ENCODE measurements at regions of chr13 and their contacts with region 1.

Region 1: DNA sequence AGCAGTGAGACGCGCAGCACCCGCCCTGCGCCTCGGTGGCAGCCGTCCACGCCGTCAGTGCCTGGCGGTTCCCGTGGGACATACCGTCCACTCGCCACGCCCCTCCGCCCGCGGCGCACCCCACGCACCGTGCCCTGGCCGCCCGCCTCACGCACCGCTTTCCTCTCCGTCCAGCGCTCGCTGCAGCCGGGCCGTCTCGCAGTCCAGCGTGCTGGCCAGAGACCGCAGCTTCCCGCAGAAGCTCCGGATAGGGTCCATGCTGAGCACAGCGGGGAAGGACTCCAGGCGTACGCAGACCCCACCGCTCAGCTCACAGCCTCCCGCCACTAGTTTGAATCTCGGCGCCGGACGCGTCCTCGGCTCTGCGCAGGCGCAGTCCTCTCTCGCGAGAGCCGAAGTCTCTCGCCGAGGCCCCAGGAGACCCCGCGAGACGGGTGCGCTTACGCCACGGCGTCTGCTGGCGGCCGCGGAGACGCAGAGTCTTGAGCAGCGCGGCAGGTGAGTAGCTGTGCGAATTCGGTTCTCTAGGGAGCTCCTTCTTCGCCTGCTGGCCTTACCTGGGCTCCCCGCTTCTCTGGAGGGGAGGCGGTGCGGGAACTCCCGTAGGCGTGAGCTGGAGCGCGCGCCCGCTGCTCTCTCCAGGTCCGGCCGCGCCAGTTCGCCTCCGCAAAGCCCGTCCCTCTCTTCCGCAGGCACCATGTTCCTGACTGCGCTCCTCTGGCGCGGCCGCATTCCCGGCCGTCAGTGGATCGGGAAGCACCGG is at the starts of genes MRPL57 and SKA3:
- DNase-seq: peak; percentile 69 to 92
- ATAC-seq: peak; percentile 96 to 98
- H3K4me3 ChIP-seq: peak within 1 kb of the TSS; percentile 75
- H3K27ac ChIP-seq: peak within 1 kb of the TSS; percentile 92 to 100
- H3K4me1 ChIP-seq: peaks cover 16% of the 10 kb centered on the region; the same call in 2 of the 3 replicates
- CTCF ChIP-seq: no peak
- EP300 ChIP-seq: no peak
- POLR2A ChIP-seq: peak; percentile 90
- RAD21 ChIP-seq: no peak
- polyA plus RNA-seq, gene MRPL57: 19.2 and 23.0 TPM in 2 replicates
- polyA plus RNA-seq, gene SKA3: 15.7 and 19.2 TPM in 2 replicates

Region 2: DNA sequence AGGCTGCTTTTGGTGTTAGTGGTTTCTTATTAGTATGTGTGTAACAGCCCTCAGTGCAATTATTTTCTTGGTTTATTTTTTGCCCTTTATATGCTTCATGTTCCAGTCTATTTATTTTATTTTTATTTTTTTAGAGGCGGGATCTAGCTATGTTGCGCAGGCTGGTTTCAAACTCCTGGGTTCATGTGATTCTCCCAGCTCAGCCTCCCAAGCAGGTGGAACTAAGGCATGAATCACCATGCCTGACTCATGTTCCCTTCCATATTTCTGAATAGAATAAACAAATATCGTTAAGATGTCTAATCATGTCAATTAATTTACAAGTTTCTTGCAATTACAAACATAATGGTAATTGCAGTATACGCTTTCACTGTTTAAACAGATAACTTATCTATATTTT is 11.8 kb before region 1 on chr13:
- CTCF ChIA-PET with region 1: interaction called, 4 read pairs
- POLR2A ChIA-PET with region 1: interaction called, 10 read pairs
- DNase-seq: no peak
- ATAC-seq: no peak
- H3K4me3 ChIP-seq: no peak overlapping the region
- H3K27ac ChIP-seq: no peak overlapping the region
- H3K4me1 ChIP-seq: peaks cover 6% of the 10 kb centered on the region; the same call in 2 of the 3 replicates
- CTCF ChIP-seq: no peak
- EP300 ChIP-seq: no peak
- POLR2A ChIP-seq: no peak
- RAD21 ChIP-seq: no peak

Region 3: DNA sequence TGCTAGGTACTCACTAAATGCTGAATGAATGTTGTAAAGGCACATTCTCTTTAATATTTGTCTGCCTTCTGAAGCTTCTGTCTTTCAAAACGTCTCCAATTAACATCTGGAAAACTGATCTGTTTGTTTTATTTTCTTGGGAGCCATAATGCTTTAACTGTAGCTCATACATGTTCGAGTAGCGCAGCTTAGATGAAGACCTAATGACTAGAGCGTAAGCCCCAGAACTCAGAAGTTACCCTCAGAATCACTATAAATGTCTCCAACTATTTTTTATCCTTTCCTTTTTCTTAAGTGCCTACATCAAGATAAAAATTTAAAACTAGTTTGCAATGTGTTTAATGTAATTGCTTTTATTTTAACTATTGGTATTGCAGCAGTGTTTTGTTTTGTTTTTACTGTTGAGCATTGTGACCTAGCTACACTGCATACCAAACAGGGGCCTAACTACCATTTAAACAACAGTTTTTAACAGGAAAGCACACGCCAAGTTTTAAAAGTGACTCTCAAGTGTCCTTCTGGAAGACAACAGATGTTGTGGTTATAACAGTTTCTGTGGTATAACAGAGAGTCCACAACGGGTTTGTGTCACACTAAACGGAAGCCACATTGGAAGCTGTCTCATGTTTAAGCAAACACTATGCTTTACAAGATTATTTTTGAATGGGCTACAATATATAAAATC is 42.1 kb after region 1 on chr13:
- CTCF ChIA-PET with region 1: no interaction called
- POLR2A ChIA-PET with region 1: no interaction called
- DNase-seq: no peak
- ATAC-seq: no peak
- H3K4me3 ChIP-seq: no peak overlapping the region
- H3K27ac ChIP-seq: no peak overlapping the region
- H3K4me1 ChIP-seq: no peaks in the 10 kb centered on the region
- CTCF ChIP-seq: no peak
- EP300 ChIP-seq: no peak
- POLR2A ChIP-seq: no peak
- RAD21 ChIP-seq: no peak

Measured in A549 (cell line).